ENCODE measurements at regions of chr1 and their contacts with region 1.

Region 1: GRCh38 chr1:86499987-86500593 is 31.4 kb downstream of the CLCA1 start:
- DNase-seq: peak; percentile 23 to 55 (median 48)
- ATAC-seq: peak; percentile 58; the same call in 2 of the 3 replicates
- H3K4me3 ChIP-seq: no peak overlapping the region
- H3K27ac ChIP-seq: no peak overlapping the region
- H3K4me1 ChIP-seq: no peaks in the 10 kb centered on the region; a peak in 1 of 5 replicates
- H3K27me3 ChIP-seq: peaks cover 5 to 20% of the 10 kb centered on the region in 2 experiments; a peak in 3 of 5 replicates
- CTCF ChIP-seq: peak; percentile 75 to 100 (median 99)
- EP300 ChIP-seq: no peak
- POLR2A ChIP-seq: no peak
- RAD21 ChIP-seq: peak in 1 of 2 experiments; percentile 58; a peak in 3 of 4 replicates

Region 2: DNA sequence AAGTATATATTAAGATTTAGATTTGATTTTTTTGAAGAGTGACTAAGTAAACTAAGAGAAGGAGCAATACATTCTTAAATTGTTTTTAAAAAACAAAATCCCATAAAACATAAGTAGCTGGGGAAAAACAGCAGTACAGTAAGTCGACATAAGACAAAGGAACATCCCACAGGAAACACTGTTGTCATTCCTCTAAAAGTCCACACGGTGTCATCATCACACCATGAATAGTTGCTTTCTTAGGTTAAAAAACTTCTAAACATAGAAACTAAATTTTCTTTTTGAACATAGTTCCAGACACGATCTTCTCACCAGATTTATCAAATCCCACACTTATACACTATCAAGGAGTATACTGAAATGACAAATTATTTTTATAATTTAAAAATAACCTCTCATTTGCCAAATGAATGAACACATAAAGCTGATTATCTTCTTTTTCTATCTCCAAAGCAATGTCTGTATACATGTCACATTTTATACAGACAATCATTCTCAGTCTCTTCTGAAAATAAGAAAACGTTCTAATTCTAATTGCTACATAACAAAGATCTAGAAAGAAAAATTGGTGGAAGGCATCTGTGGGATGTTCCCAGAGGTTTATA is 119.7 kb before region 1 on chr1:
- CTCF ChIA-PET with region 1: interaction called, 29 read pairs
- POLR2A ChIA-PET with region 1: no interaction called
- in situ Hi-C with region 1: no loop called
- intact Hi-C with region 1: loop called (anchors 2 kb)
- DNase-seq: peak; percentile 40 to 68 (median 45)
- ATAC-seq: peak; percentile 72
- H3K4me3 ChIP-seq: no peak overlapping the region
- H3K27ac ChIP-seq: no peak overlapping the region
- H3K4me1 ChIP-seq: no peaks in the 10 kb centered on the region
- H3K27me3 ChIP-seq: no peaks in the 10 kb centered on the region
- CTCF ChIP-seq: peak; percentile 53 to 77 (median 58); a peak in 4 of 6 replicates
- EP300 ChIP-seq: no peak
- POLR2A ChIP-seq: no peak
- RAD21 ChIP-seq: peak; percentile 87 to 88

Region 3: GRCh38 chr1:86395771-86396497 is 104.2 kb before region 1 on chr1 and contains the start of gene ODF2L:
- CTCF ChIA-PET with region 1: interaction called, 3 read pairs
- POLR2A ChIA-PET with region 1: no interaction called
- in situ Hi-C with region 1: loop called (anchors 10 kb)
- intact Hi-C with region 1: no loop called
- DNase-seq: peak; percentile 61 to 77 (median 70)
- ATAC-seq: peak; percentile 100
- H3K4me3 ChIP-seq: peak within 1 kb of the TSS; percentile 48
- H3K27ac ChIP-seq: no peak within 1 kb of the TSS
- H3K4me1 ChIP-seq: peaks cover 0 to 9% of the 10 kb centered on the region in 2 experiments; a peak in 2 of 5 replicates
- H3K27me3 ChIP-seq: peaks cover 0 to 4% of the 10 kb centered on the region in 2 experiments; a peak in 1 of 5 replicates
- CTCF ChIP-seq: no peak
- EP300 ChIP-seq: no peak
- POLR2A ChIP-seq: no peak; the same call in 1 of the 2 replicates
- RAD21 ChIP-seq: no peak
- polyA plus RNA-seq, gene ODF2L: 2.2 to 3.3 TPM

Region 4: GRCh38 chr1:86419277-86419903 is 80.7 kb before region 1 on chr1:
- CTCF ChIA-PET with region 1: interaction called, 9 read pairs
- POLR2A ChIA-PET with region 1: no interaction called
- in situ Hi-C with region 1: no loop called
- intact Hi-C with region 1: loop called (anchors 1 kb)
- DNase-seq: peak; percentile 25 to 66 (median 42)
- ATAC-seq: peak; percentile 89
- H3K4me3 ChIP-seq: no peak overlapping the region
- H3K27ac ChIP-seq: no peak overlapping the region
- H3K4me1 ChIP-seq: no peaks in the 10 kb centered on the region
- H3K27me3 ChIP-seq: peaks cover 0 to 10% of the 10 kb centered on the region in 2 experiments; a peak in 2 of 5 replicates
- CTCF ChIP-seq: peak; percentile 69 to 87 (median 86)
- EP300 ChIP-seq: no peak
- POLR2A ChIP-seq: no peak
- RAD21 ChIP-seq: peak; percentile 81 to 94

Region 5: DNA sequence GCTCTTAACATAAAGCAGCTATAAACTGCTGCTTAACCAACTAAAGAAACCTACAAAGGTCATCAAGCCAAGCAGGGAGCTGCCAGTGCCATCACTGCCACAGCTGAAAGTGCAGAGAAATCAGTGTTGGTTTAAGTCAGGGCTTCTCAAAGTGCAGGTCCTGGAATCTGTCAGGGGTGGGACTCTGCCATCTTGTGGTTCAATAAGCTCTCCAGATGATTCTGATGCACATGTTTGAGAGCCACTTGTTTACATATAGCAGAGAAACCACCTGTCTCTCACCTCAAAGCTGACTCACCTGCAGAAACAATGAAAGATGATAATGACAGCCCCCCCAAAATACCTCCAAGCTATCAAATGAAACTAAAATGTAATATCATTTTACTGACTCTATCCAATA is 253.6 kb after region 1 on chr1:
- CTCF ChIA-PET with region 1: no interaction called
- POLR2A ChIA-PET with region 1: no interaction called
- in situ Hi-C with region 1: no loop called
- intact Hi-C with region 1: loop called (anchors 5 kb)
- DNase-seq: peak in 1 of 4 experiments; percentile 36
- ATAC-seq: peak; percentile 62
- H3K4me3 ChIP-seq: no peak overlapping the region
- H3K27ac ChIP-seq: no peak overlapping the region
- H3K4me1 ChIP-seq: peaks cover 4 to 7% of the 10 kb centered on the region in 2 experiments; a peak in 2 of 5 replicates
- H3K27me3 ChIP-seq: peaks cover 3 to 19% of the 10 kb centered on the region in 2 experiments; a peak in 4 of 5 replicates
- CTCF ChIP-seq: peak; percentile 23 to 44 (median 44); a peak in 4 of 6 replicates
- EP300 ChIP-seq: no peak
- POLR2A ChIP-seq: no peak
- RAD21 ChIP-seq: peak; percentile 7 to 47; a peak in 2 of 4 replicates